CD8-positive, alpha-beta T cell (primary cell): ENCODE measurements at regions of chr7 and their contacts with region 1.

Region 1: GRCh38 chr7:155815332-155816191 is 3.3 kb upstream of the SHH start:
- DNase-seq: peak; percentile 26 to 73 (median 57)
- ATAC-seq: peak; percentile 64
- H3K4me3 ChIP-seq: no peak overlapping the region
- H3K4me3 Mint-ChIP-seq: no peak overlapping the region
- H3K27ac ChIP-seq: no peak overlapping the region
- H3K27ac Mint-ChIP-seq: no peak overlapping the region
- H3K4me1 ChIP-seq: no peaks in the 10 kb centered on the region
- H3K4me1 Mint-ChIP-seq: peaks cover 15% of the 10 kb centered on the region
- H3K27me3 ChIP-seq: peaks cover 0 to 11% of the 10 kb centered on the region in 2 experiments
- H3K27me3 Mint-ChIP-seq: peaks cover 41% of the 10 kb centered on the region
- CTCF ChIP-seq: peak; percentile 33

Region 2: GRCh38 chr7:154364170-154364569 is 1451.4 kb before region 1 on chr7:
- CTCF ChIA-PET with region 1: no interaction called
- POLR2A ChIA-PET with region 1: no interaction called
- intact Hi-C with region 1: no loop called
- DNase-seq: no peak
- ATAC-seq: no peak
- H3K4me3 ChIP-seq: no peak overlapping the region
- H3K4me3 Mint-ChIP-seq: no peak overlapping the region
- H3K27ac ChIP-seq: no peak overlapping the region
- H3K27ac Mint-ChIP-seq: no peak overlapping the region
- H3K4me1 ChIP-seq: no peaks in the 10 kb centered on the region
- H3K4me1 Mint-ChIP-seq: no peaks in the 10 kb centered on the region
- H3K27me3 ChIP-seq: no peaks in the 10 kb centered on the region
- H3K27me3 Mint-ChIP-seq: no peaks in the 10 kb centered on the region
- CTCF ChIP-seq: no peak

Region 3: DNA sequence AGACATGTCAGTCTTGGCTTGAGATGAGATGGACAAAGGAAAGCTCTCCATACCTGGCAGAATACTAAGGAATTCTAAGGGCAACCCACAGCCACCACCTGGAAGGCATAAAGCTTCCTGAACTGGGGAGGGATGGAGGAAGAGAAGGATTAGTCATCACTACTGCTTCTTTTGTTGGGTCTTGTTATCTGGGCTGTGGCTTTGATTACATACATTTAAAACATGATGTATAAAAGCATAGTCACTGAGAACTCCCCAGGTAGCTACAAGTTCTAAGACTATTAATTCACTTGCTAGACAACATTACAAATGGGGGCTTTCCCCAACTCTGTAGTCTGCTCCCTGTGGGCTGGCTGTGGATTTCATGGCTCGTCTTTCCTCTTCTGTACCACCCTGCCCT is 112.9 kb before region 1 on chr7:
- CTCF ChIA-PET with region 1: no interaction called
- POLR2A ChIA-PET with region 1: no interaction called
- intact Hi-C with region 1: no loop called
- DNase-seq: no peak
- ATAC-seq: no peak
- H3K4me3 ChIP-seq: no peak overlapping the region
- H3K4me3 Mint-ChIP-seq: no peak overlapping the region
- H3K27ac ChIP-seq: no peak overlapping the region
- H3K27ac Mint-ChIP-seq: no peak overlapping the region
- H3K4me1 ChIP-seq: no peaks in the 10 kb centered on the region
- H3K4me1 Mint-ChIP-seq: peaks cover 26% of the 10 kb centered on the region
- H3K27me3 ChIP-seq: no peaks in the 10 kb centered on the region
- H3K27me3 Mint-ChIP-seq: no peaks in the 10 kb centered on the region
- CTCF ChIP-seq: no peak

Region 4: GRCh38 chr7:156473476-156474240 is 658.1 kb after region 1 on chr7:
- CTCF ChIA-PET with region 1: interaction called, 13 read pairs
- POLR2A ChIA-PET with region 1: no interaction called
- intact Hi-C with region 1: loop called in 1 of 2 experiments (anchors 1 kb)
- DNase-seq: peak in 4 of 9 experiments; percentile 13 to 41 (median 22)
- ATAC-seq: no peak
- H3K4me3 ChIP-seq: no peak overlapping the region
- H3K4me3 Mint-ChIP-seq: no peak overlapping the region
- H3K27ac ChIP-seq: no peak overlapping the region
- H3K27ac Mint-ChIP-seq: no peak overlapping the region
- H3K4me1 ChIP-seq: no peaks in the 10 kb centered on the region
- H3K4me1 Mint-ChIP-seq: no peaks in the 10 kb centered on the region
- H3K27me3 ChIP-seq: no peaks in the 10 kb centered on the region
- H3K27me3 Mint-ChIP-seq: peaks cover 27% of the 10 kb centered on the region
- CTCF ChIP-seq: peak; percentile 37

Region 5: GRCh38 chr7:156827587-156828203 is 1012.1 kb after region 1 on chr7:
- CTCF ChIA-PET with region 1: no interaction called
- POLR2A ChIA-PET with region 1: no interaction called
- intact Hi-C with region 1: loop called (anchors 5 kb)
- DNase-seq: peak in 2 of 9 experiments; percentile 20 to 37
- ATAC-seq: no peak
- H3K4me3 ChIP-seq: no peak overlapping the region
- H3K4me3 Mint-ChIP-seq: no peak overlapping the region
- H3K27ac ChIP-seq: no peak overlapping the region
- H3K27ac Mint-ChIP-seq: no peak overlapping the region
- H3K4me1 ChIP-seq: no peaks in the 10 kb centered on the region
- H3K4me1 Mint-ChIP-seq: no peaks in the 10 kb centered on the region
- H3K27me3 ChIP-seq: no peaks in the 10 kb centered on the region
- H3K27me3 Mint-ChIP-seq: no peaks in the 10 kb centered on the region
- CTCF ChIP-seq: peak; percentile 68